Activated CD8-positive, alpha-beta T cell treated with anti-CD3 and anti-CD28 coated beads for 36 hours (primary cell): ENCODE measurements at regions of chr16 and their contacts with region 1.

Region 1: GRCh38 chr16:3158471-3159314 is 23.9 kb downstream of the ZNF213 start:
- DNase-seq: peak; percentile 91
- ATAC-seq: peak; percentile 83
- H3K4me3 Mint-ChIP-seq: peak overlapping the region; percentile 80
- H3K27ac Mint-ChIP-seq: peak overlapping the region; percentile 86
- H3K4me1 Mint-ChIP-seq: peaks cover 26% of the 10 kb centered on the region
- H3K27me3 Mint-ChIP-seq: peaks cover 7% of the 10 kb centered on the region
- CTCF ChIP-seq: no peak

Region 2: GRCh38 chr16:3106205-3106928 is 52.3 kb before region 1 on chr16:
- CTCF ChIA-PET with region 1: no interaction called
- POLR2A ChIA-PET with region 1: no interaction called
- intact Hi-C with region 1: loop called (anchors 5 kb)
- DNase-seq: peak; percentile 96
- ATAC-seq: peak; percentile 96
- H3K4me3 Mint-ChIP-seq: peak overlapping the region; percentile 79
- H3K27ac Mint-ChIP-seq: peak overlapping the region; percentile 92
- H3K4me1 Mint-ChIP-seq: peaks cover 13% of the 10 kb centered on the region
- H3K27me3 Mint-ChIP-seq: no peaks in the 10 kb centered on the region
- CTCF ChIP-seq: no peak

Region 3: DNA sequence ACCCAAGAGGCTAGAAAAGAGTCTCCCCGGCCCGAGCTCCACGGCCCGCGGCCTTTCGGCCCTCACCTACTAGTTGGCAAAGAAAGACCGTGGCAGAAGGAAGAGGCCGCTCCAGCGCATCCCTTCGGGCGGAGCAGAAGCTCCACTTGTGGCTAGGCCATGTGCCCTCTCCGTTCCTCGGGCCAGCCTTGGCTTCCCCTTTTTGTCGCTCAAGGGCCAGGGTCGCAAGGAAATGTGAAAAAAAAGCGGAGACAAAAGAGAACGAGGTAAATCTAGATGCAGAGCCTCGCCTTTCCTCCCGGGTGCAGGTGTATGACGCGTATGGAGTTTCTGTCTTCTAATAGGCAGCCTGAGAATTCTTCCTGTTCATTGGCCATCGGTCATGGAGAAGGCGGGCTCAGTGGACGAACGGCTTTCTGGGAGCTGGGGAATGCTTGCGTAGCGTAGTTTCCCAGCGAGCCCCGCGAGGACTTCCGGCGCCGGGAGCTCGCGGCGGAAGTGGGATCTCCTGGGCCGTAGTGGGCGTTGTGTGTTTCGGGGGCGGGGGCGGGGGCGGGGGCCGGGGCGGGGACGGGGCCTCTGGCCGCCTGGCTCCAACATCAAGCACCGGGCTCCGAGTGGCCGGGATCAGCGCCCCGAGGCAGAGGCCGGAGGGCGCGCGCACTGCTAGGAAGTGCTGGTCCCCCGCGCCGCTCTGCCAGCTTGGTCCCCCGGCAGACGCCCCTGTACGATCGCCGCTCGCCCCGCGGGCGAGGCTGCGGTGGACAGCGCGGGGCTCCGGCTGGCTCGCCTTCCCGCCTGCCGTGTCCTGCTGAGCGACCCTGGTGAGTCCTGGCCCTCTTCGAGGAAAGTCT is 23.9 kb before region 1 on chr16 and contains the start of gene ZNF213:
- CTCF ChIA-PET with region 1: interaction called, 11 read pairs
- POLR2A ChIA-PET with region 1: interaction called, 10 read pairs
- intact Hi-C with region 1: no loop called
- DNase-seq: peak; percentile 97
- ATAC-seq: peak; percentile 98
- H3K4me3 Mint-ChIP-seq: peak within 1 kb of the TSS; percentile 99
- H3K27ac Mint-ChIP-seq: peak within 1 kb of the TSS; percentile 98
- H3K4me1 Mint-ChIP-seq: peaks cover 14% of the 10 kb centered on the region
- H3K27me3 Mint-ChIP-seq: no peaks in the 10 kb centered on the region
- CTCF ChIP-seq: no peak
- total RNA-seq, gene ZNF213: 6.1 to 7.5 TPM

Region 4: GRCh38 chr16:3173892-3174617 is 15.4 kb after region 1 on chr16:
- CTCF ChIA-PET with region 1: interaction called, 20 read pairs
- POLR2A ChIA-PET with region 1: interaction called, 9 read pairs
- intact Hi-C with region 1: loop called (anchors 2 kb)
- DNase-seq: peak; percentile 71
- ATAC-seq: peak; percentile 28
- H3K4me3 Mint-ChIP-seq: peak overlapping the region; percentile 70
- H3K27ac Mint-ChIP-seq: peak overlapping the region; percentile 43
- H3K4me1 Mint-ChIP-seq: peaks cover 34% of the 10 kb centered on the region
- H3K27me3 Mint-ChIP-seq: peaks cover 45% of the 10 kb centered on the region
- CTCF ChIP-seq: peak; percentile 68